HCT116 (cell line): ENCODE measurements at regions of chr1 and their contacts with region 1.

Region 1: GRCh38 chr1:200971955-200972711 is 51.4 kb downstream of the KIF21B start:
- DNase-seq: peak; percentile 8
- ATAC-seq: peak; percentile 71
- H3K4me3 ChIP-seq: no peak overlapping the region
- H3K27ac ChIP-seq: no peak overlapping the region
- H3K4me1 ChIP-seq: peaks cover 0 to 4% of the 10 kb centered on the region in 2 experiments; a peak in 2 of 4 replicates
- H3K27me3 ChIP-seq: no peaks in the 10 kb centered on the region
- CTCF ChIP-seq: peak; percentile 61 to 76 (median 72)
- POLR2A ChIP-seq: no peak
- RAD21 ChIP-seq: peak; percentile 87

Region 2: DNA sequence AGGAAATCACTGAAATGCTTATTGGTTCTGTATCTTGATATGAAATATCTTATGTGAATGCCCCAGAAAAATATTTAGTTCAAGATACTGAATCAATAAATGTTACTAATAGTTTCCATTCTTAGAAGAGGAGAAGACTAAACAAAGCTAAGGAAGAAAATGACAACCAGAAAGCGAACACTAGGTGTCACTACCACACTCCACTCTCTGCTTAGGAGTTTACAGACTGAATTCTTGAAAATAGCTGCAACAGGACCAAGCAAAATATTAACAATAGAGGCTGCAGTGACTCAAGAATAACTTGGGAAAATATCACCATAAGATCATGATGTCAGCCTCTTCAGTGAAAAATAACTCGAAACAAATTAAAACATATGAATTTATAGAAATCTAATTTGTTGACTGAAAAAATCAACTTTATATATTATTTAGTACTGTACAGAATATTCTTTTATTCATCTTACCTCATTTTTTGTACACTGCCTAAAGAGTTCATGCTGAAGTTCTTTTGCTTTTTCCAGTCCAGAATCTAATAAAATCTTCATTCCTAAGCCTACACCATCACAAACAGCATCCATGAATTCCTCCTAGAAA is 413.2 kb before region 1 on chr1:
- CTCF ChIA-PET with region 1: interaction called, 12 read pairs
- POLR2A ChIA-PET with region 1: no interaction called
- RAD21 ChIA-PET with region 1: no interaction called
- intact Hi-C with region 1: no loop called
- DNase-seq: peak; percentile 51
- ATAC-seq: peak; percentile 81
- H3K4me3 ChIP-seq: no peak overlapping the region
- H3K27ac ChIP-seq: no peak overlapping the region
- H3K4me1 ChIP-seq: no peaks in the 10 kb centered on the region
- H3K27me3 ChIP-seq: no peaks in the 10 kb centered on the region
- CTCF ChIP-seq: peak; percentile 64 to 80 (median 75)
- POLR2A ChIP-seq: no peak
- RAD21 ChIP-seq: peak; percentile 78

Region 3: DNA sequence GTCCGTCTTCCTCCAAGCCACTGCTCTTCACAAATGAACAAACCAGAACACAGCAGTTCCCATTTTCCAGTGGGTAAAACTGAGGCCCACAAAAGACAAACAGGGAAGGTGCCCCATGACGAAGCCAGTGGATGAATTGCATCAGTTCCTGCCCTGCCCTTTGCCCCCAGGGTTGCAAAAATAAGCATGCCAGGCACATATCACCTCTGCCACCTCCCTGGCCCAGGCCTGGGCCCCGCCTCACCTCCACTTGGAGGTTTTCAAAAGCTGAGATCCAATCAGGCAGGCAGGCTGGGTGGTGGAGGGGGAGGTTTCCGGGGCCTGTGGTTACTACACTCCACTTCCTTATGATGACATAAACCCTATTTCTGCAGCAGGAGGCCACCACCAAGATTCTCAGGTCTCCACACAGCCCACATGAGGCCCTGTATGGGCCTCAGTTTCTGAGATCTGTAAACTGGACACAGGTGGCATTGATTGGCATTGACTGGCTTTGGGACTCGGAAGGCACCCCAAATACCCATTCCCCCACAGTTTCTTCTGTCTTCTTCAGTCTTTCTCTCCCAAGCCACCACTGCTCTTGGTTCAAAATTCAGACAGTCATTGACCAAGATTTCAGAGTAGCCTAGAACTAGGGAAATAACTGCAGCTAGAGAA is 47.3 kb after region 1 on chr1:
- CTCF ChIA-PET with region 1: interaction called, 16 read pairs
- POLR2A ChIA-PET with region 1: no interaction called
- RAD21 ChIA-PET with region 1: no interaction called
- intact Hi-C with region 1: no loop called
- DNase-seq: peak; percentile 49
- ATAC-seq: no peak
- H3K4me3 ChIP-seq: no peak overlapping the region
- H3K27ac ChIP-seq: no peak overlapping the region
- H3K4me1 ChIP-seq: peaks cover 13 to 42% of the 10 kb centered on the region in 2 experiments; a peak in 3 of 4 replicates
- H3K27me3 ChIP-seq: no peaks in the 10 kb centered on the region
- CTCF ChIP-seq: no peak
- POLR2A ChIP-seq: no peak
- RAD21 ChIP-seq: no peak

Region 4: DNA sequence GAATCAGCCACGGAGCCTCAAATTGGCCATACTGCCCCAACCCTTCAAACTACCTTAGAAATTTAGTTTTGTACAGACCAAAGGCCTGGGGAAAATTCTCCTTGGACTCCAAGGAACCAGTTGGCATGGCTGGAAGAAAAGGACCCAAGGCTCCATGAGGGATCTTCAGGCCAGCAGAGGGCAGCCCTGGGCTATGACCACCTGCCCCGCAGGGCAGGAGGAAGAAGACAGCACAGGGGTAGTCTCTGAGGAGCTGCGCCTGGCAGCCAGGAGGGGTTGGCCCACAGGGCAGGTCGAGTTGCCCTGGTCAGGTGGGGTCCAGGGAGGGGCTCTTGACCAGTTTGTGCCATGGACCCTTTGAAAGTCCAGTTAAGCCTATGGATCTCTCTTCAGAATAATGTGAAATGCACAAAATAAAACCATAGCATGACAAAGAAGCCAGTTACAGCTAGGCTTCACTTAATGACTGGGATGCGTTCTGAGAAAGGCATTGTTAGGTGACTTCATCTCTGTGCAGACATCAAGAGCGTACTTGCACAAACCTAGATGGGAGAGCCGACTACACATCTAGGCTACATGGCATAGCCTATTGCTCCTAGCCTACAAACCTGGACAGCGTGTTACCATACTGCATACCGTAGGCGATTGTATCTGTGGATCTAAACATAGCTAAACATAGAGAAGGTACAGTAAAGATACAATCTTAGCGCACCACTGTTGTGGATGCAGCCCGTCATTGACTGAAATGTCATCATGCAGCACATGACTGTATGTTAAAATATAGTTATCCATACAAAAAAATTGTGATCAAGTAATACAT is 114.0 kb after region 1 on chr1:
- CTCF ChIA-PET with region 1: interaction called, 10 read pairs
- POLR2A ChIA-PET with region 1: no interaction called
- RAD21 ChIA-PET with region 1: interaction called in 1 of 2 experiments, 3 read pairs
- intact Hi-C with region 1: no loop called
- DNase-seq: peak; percentile 51
- ATAC-seq: peak; percentile 100
- H3K4me3 ChIP-seq: no peak overlapping the region
- H3K27ac ChIP-seq: no peak overlapping the region
- H3K4me1 ChIP-seq: no peaks in the 10 kb centered on the region; a peak in 1 of 4 replicates
- H3K27me3 ChIP-seq: no peaks in the 10 kb centered on the region; the same call in 1 of the 2 replicates
- CTCF ChIP-seq: peak; percentile 83 to 94 (median 86)
- POLR2A ChIP-seq: no peak
- RAD21 ChIP-seq: peak; percentile 94

Region 5: DNA sequence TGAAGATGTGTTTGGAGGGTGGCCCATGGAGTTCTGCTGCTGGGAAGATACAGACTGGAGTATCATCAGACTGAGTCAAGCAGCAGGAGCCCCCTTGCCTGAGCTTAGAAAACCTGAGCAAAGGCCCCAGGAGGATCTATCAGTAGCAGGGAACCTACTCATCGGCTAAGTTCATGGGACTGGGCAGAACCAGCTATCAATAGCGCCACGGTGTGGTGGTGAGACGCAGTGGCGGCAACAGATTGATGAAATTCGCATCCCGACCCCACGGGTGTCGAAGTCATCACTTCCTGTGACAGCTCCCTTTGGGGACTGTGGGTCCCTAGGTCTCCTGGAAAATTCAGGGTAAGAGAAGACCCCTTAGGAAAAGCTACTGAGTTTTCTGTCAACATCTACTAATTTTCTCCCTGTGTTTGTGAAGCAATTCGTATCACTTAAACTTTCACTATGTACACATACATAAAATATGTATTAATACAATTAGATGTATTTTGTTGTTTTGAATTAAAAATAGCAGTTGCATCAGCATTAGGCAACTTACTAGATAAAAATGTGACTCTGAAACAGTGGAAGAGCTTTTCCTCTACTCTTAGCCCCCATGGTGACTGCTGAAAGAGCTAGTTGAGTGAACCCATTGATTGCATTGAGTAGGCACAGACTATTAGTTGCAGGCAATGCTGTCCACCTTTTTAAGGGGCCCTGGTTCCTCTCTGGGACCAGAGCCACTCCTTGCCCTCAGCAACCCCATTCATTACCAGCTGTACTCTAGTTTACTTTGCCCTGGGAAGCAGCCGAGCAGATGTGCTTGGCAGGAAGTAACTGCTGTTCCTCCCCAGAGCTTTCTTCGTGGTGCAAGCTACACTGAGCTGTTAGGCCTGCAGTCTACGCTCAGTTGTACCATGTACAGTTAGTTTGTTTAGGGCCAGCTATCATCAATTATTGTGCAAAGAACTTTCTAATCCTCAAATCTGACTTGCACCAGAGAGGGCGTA is 147.4 kb after region 1 on chr1:
- CTCF ChIA-PET with region 1: interaction called, 45 read pairs
- POLR2A ChIA-PET with region 1: interaction called, 7 read pairs
- RAD21 ChIA-PET with region 1: interaction called, 5 to 13 read pairs
- intact Hi-C with region 1: loop called (anchors 1 kb)
- DNase-seq: peak; percentile 39
- ATAC-seq: peak; percentile 53
- H3K4me3 ChIP-seq: no peak overlapping the region
- H3K27ac ChIP-seq: no peak overlapping the region
- H3K4me1 ChIP-seq: peaks cover 0 to 17% of the 10 kb centered on the region in 2 experiments; a peak in 1 of 4 replicates
- H3K27me3 ChIP-seq: peaks cover 9% of the 10 kb centered on the region; the same call in 1 of the 2 replicates
- CTCF ChIP-seq: peak; percentile 64 to 90 (median 89)
- POLR2A ChIP-seq: no peak
- RAD21 ChIP-seq: peak; percentile 67